Activated CD4-positive, alpha-beta memory T cell treated with anti-CD3 and anti-CD28 coated beads for 36 hours (primary cell): ENCODE measurements at regions of chr13 and their contacts with region 1.

Region 1: DNA sequence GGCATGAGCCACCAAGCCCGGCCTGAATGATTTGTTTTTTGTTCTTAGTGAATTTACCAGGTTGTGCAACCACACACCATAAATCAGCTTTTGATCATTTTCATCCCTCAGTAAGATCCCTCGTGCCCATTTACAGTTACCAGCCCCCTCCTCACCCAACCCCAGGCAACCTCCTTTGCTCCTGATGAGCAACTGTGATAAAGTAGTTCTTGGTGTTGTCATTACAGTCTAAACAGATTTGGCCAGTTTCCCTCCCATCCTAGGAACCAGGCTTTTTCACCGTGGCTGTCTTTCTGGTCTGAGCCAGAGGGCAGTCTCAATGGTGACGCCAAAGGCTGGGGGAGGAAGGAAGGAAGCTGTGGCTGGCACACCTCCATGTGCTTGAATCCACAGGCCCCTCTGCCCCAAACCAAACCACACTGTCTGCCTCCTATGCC is 61.2 kb upstream of the WDFY2 start:
- DNase-seq: peak; percentile 50
- H3K4me3 Mint-ChIP-seq: no peak overlapping the region
- H3K27ac Mint-ChIP-seq: no peak overlapping the region
- H3K4me1 Mint-ChIP-seq: peaks cover 16% of the 10 kb centered on the region
- H3K27me3 Mint-ChIP-seq: no peaks in the 10 kb centered on the region

Region 2: GRCh38 chr13:51425410-51426042 is 97.6 kb before region 1 on chr13:
- CTCF ChIA-PET with region 1: no interaction called
- POLR2A ChIA-PET with region 1: no interaction called
- intact Hi-C with region 1: no loop called
- DNase-seq: no peak
- H3K4me3 Mint-ChIP-seq: no peak overlapping the region
- H3K27ac Mint-ChIP-seq: no peak overlapping the region
- H3K4me1 Mint-ChIP-seq: peaks cover 74% of the 10 kb centered on the region
- H3K27me3 Mint-ChIP-seq: no peaks in the 10 kb centered on the region

Region 3: GRCh38 chr13:51502153-51502651 is 20.9 kb before region 1 on chr13:
- CTCF ChIA-PET with region 1: no interaction called
- POLR2A ChIA-PET with region 1: no interaction called
- intact Hi-C with region 1: loop called (anchors 1 kb)
- DNase-seq: peak; percentile 63
- H3K4me3 Mint-ChIP-seq: no peak overlapping the region
- H3K27ac Mint-ChIP-seq: no peak overlapping the region
- H3K4me1 Mint-ChIP-seq: peaks cover 31% of the 10 kb centered on the region
- H3K27me3 Mint-ChIP-seq: peaks cover 11% of the 10 kb centered on the region